ENCODE measurements at regions of chr20 and their contacts with region 1.

Region 1: GRCh38 chr20:52312132-52312729 is 120.7 kb upstream of the ZFP64 start:
- DNase-seq: peak in 1 of 2 donors; percentile 40
- ATAC-seq: peak in 6 of 8 donors; percentile 44 to 67 (median 60)
- H3K4me3 ChIP-seq: no peak overlapping the region
- H3K27ac ChIP-seq: no peak overlapping the region
- H3K4me1 ChIP-seq: peaks cover 0 to 12% (median 3%) of the 10 kb centered on the region in 9 donors
- H3K27me3 ChIP-seq: peaks cover 0 to 5% (median 0%) of the 10 kb centered on the region in 7 donors
- CTCF ChIP-seq: peak; percentile 41 to 85 (median 76)

Region 2: DNA sequence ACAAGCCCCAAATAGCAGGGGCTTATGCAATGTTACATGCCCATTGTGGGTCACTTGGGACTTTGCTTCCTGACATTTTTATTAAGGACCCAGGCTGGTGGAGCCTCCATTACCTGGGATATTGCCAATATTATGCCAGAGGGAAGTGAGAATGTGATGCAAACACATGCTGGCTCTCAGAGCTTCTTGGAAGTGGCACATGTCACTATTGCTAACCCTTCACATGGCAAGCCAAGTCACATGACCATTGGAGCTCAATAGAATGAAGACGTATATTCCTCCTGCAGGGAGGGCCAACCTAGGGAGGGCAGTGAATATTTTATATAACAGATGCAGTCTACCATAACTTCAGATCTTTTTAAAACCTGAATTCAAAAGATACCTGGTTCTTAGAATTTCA is 20.0 kb after region 1 on chr20:
- intact Hi-C with region 1: no loop called
- DNase-seq: no peak
- ATAC-seq: no peak
- H3K4me3 ChIP-seq: no peak overlapping the region
- H3K27ac ChIP-seq: no peak overlapping the region
- H3K4me1 ChIP-seq: no peaks in the 10 kb centered on the region
- H3K27me3 ChIP-seq: peaks cover 0 to 10% (median 0%) of the 10 kb centered on the region in 7 donors
- CTCF ChIP-seq: no peak

Region 3: GRCh38 chr20:52379723-52380336 is 67.6 kb after region 1 on chr20:
- intact Hi-C with region 1: loop called in 7 of 10 experiments (anchors 2 to 10 kb)
- DNase-seq: peak; percentile 15 to 33
- ATAC-seq: no peak
- H3K4me3 ChIP-seq: no peak overlapping the region
- H3K27ac ChIP-seq: no peak overlapping the region
- H3K4me1 ChIP-seq: no peaks in the 10 kb centered on the region
- H3K27me3 ChIP-seq: no peaks in the 10 kb centered on the region
- CTCF ChIP-seq: peak; percentile 58 to 97 (median 92)

Region 4: DNA sequence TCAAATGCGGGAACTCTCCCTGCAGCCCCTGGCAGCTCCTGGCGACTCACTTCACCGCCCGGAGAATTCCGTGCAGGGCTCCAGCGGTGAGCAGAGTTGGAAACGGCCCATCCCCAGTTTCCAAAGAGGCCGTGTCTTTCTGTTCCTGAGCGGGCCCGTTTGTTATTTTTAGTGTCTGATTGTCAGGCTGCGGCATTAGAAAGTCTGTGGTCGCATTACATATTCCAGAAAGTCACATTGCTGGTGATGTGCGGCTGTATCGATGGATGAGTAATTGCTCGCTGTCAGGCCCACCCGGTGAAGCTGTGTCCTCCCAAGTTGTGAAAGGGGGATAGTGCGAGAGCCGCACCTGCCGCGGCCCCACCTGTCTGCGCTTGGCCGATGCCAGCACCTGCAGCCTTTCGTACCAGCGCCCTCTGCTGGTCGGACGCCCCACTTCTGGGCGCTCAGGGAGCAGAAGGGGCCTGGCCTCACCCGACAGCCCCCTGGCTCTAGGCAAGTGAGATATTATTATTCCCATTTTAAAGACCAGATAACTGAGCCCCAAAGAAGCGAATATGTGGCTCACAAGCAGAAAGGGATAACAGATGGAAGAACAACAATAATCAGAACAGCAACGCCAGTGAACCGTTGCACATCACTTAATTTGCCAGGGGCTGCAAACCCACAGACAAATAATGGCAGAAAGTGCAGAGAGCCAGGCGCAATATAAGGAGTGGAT is 904.8 kb after region 1 on chr20:
- intact Hi-C with region 1: loop called in 6 of 10 experiments (anchors 1 to 10 kb)
- DNase-seq: peak; percentile 57 to 74
- ATAC-seq: peak; percentile 61 to 89 (median 79)
- H3K4me3 ChIP-seq: peak overlapping the region in 5 of 10 donors; percentile 17 to 39 (median 32)
- H3K27ac ChIP-seq: no peak overlapping the region
- H3K4me1 ChIP-seq: peaks cover 0 to 9% (median 6%) of the 10 kb centered on the region in 9 donors
- H3K27me3 ChIP-seq: peaks cover 0 to 17% (median 0%) of the 10 kb centered on the region in 7 donors
- CTCF ChIP-seq: peak; percentile 79 to 94 (median 91)

Region 5: DNA sequence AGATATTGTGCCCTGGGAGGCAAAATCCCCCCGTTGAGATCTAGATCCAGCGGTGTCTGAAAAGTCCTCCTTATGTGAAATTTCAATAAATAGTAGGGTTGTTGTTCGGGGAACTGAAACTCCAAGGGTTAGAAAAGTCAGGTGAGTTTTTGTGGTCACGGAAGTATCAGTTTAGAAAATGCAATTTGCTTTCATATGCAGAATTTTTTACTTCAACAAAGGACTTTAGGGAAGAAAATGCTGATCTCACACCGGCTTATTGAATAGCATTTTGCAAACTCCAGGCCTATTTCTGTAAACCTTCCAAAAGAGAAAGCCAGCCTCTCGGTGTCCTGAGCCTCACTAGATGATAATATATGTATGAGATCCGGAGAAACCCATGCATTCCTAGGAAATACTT is 914.6 kb after region 1 on chr20:
- intact Hi-C with region 1: loop called in 2 of 10 experiments (anchors 5 to 10 kb)
- DNase-seq: no peak
- ATAC-seq: no peak
- H3K4me3 ChIP-seq: no peak overlapping the region
- H3K27ac ChIP-seq: no peak overlapping the region
- H3K4me1 ChIP-seq: no peaks in the 10 kb centered on the region
- H3K27me3 ChIP-seq: peaks cover 0 to 5% (median 0%) of the 10 kb centered on the region in 7 donors
- CTCF ChIP-seq: no peak

Measured in heart right ventricle (tissue), 16 donors.